ENCODE measurements at regions of chr10 and their contacts with region 1.

Region 1: GRCh38 chr10:103396064-103396788 is at the starts of genes ATP5MK and PDCD11:
- DNase-seq: peak; percentile 95
- H3K4me3 Mint-ChIP-seq: peak within 1 kb of the TSS; percentile 99
- H3K27ac Mint-ChIP-seq: peak within 1 kb of the TSS; percentile 96
- H3K4me1 Mint-ChIP-seq: peaks cover 58% of the 10 kb centered on the region
- H3K27me3 Mint-ChIP-seq: no peaks in the 10 kb centered on the region
- total RNA-seq, gene ATP5MK: 480 and 483 TPM in 2 replicates
- total RNA-seq, gene PDCD11: 98.4 and 99.0 TPM in 2 replicates

Region 2: GRCh38 chr10:103171278-103171677 is 224.9 kb before region 1 on chr10:
- intact Hi-C with region 1: no loop called
- DNase-seq: no peak
- H3K4me3 Mint-ChIP-seq: no peak overlapping the region
- H3K27ac Mint-ChIP-seq: no peak overlapping the region
- H3K4me1 Mint-ChIP-seq: no peaks in the 10 kb centered on the region
- H3K27me3 Mint-ChIP-seq: no peaks in the 10 kb centered on the region

Region 3: GRCh38 chr10:103350501-103351260 is 45.5 kb before region 1 on chr10 and contains the start of gene PCGF6:
- intact Hi-C with region 1: loop called (anchors 1 kb)
- DNase-seq: peak; percentile 74
- H3K4me3 Mint-ChIP-seq: peak within 1 kb of the TSS; percentile 91
- H3K27ac Mint-ChIP-seq: peak within 1 kb of the TSS; percentile 89
- H3K4me1 Mint-ChIP-seq: peaks cover 4% of the 10 kb centered on the region
- H3K27me3 Mint-ChIP-seq: no peaks in the 10 kb centered on the region
- total RNA-seq, gene PCGF6: 19.3 and 21.0 TPM in 2 replicates

Measured in activated T-helper 1 cell treated with anti-CD3 and anti-CD28 coated beads, Interleukin-12 subunit alpha, Interleukin-12 subunit beta, Interleukin-2, Interleukin-4 antibody, amounts not matched to agents 30 ng/mL and 10 ng/mL and 1 ng/mL, durations not matched to agents 14 hours and 24 hours and 36 hours (primary cell).